ENCODE measurements at regions of chr2 and their contacts with region 1.

Region 1: GRCh38 chr2:25991965-25992364 is 9.7 kb upstream of the KIF3C start:
- DNase-seq: no peak
- H3K4me3 Mint-ChIP-seq: no peak overlapping the region
- H3K27ac Mint-ChIP-seq: no peak overlapping the region
- H3K4me1 Mint-ChIP-seq: peaks cover 16% of the 10 kb centered on the region
- H3K27me3 Mint-ChIP-seq: peaks cover 11% of the 10 kb centered on the region

Region 2: GRCh38 chr2:26033818-26034636 is 42.1 kb after region 1 on chr2 and contains the start of gene RAB10:
- CTCF ChIA-PET with region 1: interaction called, 12 read pairs
- DNase-seq: peak; percentile 99
- H3K4me3 Mint-ChIP-seq: peak within 1 kb of the TSS; percentile 86
- H3K27ac Mint-ChIP-seq: peak within 1 kb of the TSS; percentile 94
- H3K4me1 Mint-ChIP-seq: peaks cover 29% of the 10 kb centered on the region
- H3K27me3 Mint-ChIP-seq: no peaks in the 10 kb centered on the region

Region 3: GRCh38 chr2:26088032-26088643 is 96.2 kb after region 1 on chr2:
- CTCF ChIA-PET with region 1: interaction called, 20 read pairs
- DNase-seq: peak; percentile 29
- H3K4me3 Mint-ChIP-seq: no peak overlapping the region
- H3K27ac Mint-ChIP-seq: no peak overlapping the region
- H3K4me1 Mint-ChIP-seq: peaks cover 11% of the 10 kb centered on the region
- H3K27me3 Mint-ChIP-seq: no peaks in the 10 kb centered on the region

Region 4: DNA sequence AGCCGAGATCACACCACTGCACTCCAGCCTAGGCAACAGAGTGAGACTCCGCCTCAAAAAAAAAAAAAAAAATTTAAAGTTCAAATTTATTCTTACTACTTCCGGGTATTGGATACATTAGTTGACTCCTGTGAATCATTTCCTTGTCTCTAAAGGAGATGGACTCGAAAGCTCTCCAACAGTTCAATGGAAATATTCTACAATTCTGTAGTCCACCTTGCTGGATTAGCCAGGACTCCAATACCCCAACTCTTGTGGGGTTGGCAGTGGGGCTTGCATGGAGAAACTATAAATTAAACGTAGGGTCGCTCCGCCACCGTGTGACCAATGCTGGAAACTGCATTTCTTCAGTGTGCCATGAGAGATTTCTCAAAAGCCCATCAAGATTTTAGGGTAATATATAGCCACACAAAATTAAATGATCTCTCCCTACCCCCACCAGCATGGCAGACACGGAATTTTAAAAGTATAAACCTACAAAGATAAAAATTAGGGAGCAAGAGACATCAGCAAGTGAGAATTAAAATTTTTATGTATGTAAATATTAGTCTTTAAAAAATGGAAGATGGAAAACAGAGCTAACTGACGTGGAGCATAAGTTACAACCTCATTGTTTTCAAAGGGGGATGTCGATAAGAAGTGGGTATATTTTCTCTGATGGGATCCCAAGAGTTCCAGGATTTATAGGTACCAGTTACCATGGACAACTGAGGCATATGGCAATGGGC is 153.2 kb after region 1 on chr2:
- CTCF ChIA-PET with region 1: interaction called, 24 read pairs
- DNase-seq: peak; percentile 75
- H3K4me3 Mint-ChIP-seq: no peak overlapping the region
- H3K27ac Mint-ChIP-seq: no peak overlapping the region
- H3K4me1 Mint-ChIP-seq: no peaks in the 10 kb centered on the region
- H3K27me3 Mint-ChIP-seq: peaks cover 13% of the 10 kb centered on the region